Mammary epithelial cell (primary cell): ENCODE measurements at regions of chr1 and their contacts with region 1.

Region 1: GRCh38 chr1:36115200-36115669 is 9.8 kb downstream of the COL8A2 start:
- DNase-seq: peak; percentile 52
- H3K4me3 ChIP-seq: peak overlapping the region in 1 of 3 experiments; percentile 6
- H3K27ac ChIP-seq: peak overlapping the region; percentile 45
- H3K4me1 ChIP-seq: peaks cover 27% of the 10 kb centered on the region
- H3K27me3 ChIP-seq: no peaks in the 10 kb centered on the region
- CTCF ChIP-seq: no peak

Region 2: DNA sequence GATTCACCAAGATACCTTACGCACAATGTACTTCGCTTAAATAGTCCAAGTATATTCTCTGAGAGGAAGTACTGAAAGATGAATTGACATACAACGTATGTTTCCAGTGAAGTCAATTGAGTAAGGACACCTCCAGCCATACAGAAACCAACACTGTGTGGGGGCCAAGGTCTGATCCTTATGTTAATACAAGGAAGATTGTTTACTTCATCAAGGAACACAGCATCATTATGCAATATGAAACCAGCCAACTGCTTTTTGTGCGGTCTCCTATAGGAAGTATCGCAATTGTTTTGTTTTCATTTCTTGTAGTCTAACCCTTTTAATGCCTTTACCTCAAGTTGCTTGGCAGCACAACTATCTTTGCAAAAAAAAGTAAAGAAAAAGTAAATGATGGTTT is 59.5 kb before region 1 on chr1:
- CTCF ChIA-PET with region 1: no interaction called
- dilution Hi-C with region 1: no loop called
- in situ Hi-C with region 1: no loop called
- intact Hi-C with region 1: no loop called
- DNase-seq: no peak
- H3K4me3 ChIP-seq: no peak overlapping the region
- H3K27ac ChIP-seq: no peak overlapping the region
- H3K4me1 ChIP-seq: no peaks in the 10 kb centered on the region
- H3K27me3 ChIP-seq: no peaks in the 10 kb centered on the region
- CTCF ChIP-seq: no peak

Region 3: GRCh38 chr1:36217670-36218069 is 102.4 kb after region 1 on chr1:
- CTCF ChIA-PET with region 1: no interaction called
- dilution Hi-C with region 1: loop called (anchors 10 kb)
- in situ Hi-C with region 1: no loop called
- intact Hi-C with region 1: no loop called
- DNase-seq: peak; percentile 27
- H3K4me3 ChIP-seq: no peak overlapping the region
- H3K27ac ChIP-seq: no peak overlapping the region
- H3K4me1 ChIP-seq: peaks cover under 1% of the 10 kb centered on the region
- H3K27me3 ChIP-seq: no peaks in the 10 kb centered on the region
- CTCF ChIP-seq: peak in 1 of 2 donors; percentile 44